ENCODE measurements at regions of chr6 and their contacts with region 1.

Region 1: DNA sequence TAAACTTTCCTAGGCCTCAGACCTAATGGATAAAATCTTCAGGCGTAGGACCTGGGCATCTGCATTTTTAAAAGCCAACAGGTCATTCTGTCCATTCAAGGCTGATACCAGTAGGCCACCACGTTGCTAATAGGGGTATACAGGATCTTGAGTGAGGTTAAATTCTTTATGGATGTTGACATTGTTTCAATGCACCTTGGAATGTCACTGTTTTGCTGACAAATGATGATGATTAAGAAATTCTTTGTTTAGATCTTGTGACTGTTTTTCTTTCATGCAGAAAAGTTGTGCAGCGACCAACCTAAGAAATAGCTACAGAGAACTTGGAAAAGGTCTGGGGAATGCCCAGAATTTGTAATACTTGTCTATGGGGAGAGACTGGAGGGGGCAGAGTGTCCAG is 101.1 kb upstream of the CLDN20 start:
- DNase-seq: no peak
- H3K4me3 ChIP-seq: no peak overlapping the region
- H3K27ac ChIP-seq: no peak overlapping the region
- H3K4me1 ChIP-seq: no peaks in the 10 kb centered on the region
- H3K27me3 ChIP-seq: no peaks in the 10 kb centered on the region
- CTCF ChIP-seq: no peak
- EP300 ChIP-seq: no peak
- POLR2A ChIP-seq: no peak

Region 2: DNA sequence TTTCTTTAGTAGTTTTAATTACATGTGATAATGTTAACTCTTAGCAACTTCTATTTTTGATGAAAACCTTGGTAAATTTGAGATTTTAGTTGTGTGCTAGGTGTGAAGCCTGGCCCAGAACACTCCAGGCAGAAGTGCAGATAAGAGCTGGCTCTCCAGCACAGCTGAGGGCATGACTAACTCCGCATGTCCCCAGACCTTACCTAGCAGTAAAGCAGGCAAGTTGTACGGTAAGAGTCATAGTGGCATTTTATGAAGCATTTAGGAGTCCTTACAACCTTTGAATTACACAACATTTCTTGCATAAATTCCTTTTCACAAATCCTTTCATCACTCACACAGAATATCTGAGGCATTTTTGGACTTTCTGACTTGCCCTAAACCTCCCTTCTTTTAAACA is 1056.4 kb before region 1 on chr6:
- intact Hi-C with region 1: loop called in 1 of 4 experiments (anchors 10 kb)
- DNase-seq: no peak
- H3K4me3 ChIP-seq: no peak overlapping the region
- H3K27ac ChIP-seq: no peak overlapping the region
- H3K4me1 ChIP-seq: no peaks in the 10 kb centered on the region
- H3K27me3 ChIP-seq: no peaks in the 10 kb centered on the region
- CTCF ChIP-seq: no peak
- EP300 ChIP-seq: no peak
- POLR2A ChIP-seq: no peak

Measured in ovary (tissue), 10 donors.